K562 (cell line): ENCODE measurements at regions of chr13 and their contacts with region 1.

Region 1: DNA sequence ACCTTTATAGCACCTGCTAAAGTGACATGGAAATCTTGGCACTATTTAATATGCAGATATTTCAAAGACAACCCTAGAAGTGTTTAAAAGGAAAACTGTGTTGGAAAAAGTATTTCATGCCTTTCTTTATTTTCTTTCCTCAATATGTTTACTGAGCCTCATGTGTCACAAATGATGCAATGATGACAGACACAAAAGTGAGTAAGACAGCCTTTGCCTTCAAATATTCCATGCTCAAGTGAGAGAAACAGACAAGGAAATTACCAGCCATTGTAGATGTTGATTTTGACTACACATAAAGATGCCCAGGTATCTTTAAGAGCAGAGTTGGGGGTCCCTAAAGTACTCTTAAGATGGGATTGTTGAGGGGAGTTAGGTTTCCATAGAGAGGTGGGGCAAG is 48.0 kb upstream of the TPP2 start:
- DNase-seq: no peak
- ATAC-seq: no peak
- H3K4me3 ChIP-seq: no peak overlapping the region
- H3K27ac ChIP-seq: no peak overlapping the region
- H3K4me1 ChIP-seq: no peaks in the 10 kb centered on the region
- H3K27me3 ChIP-seq: no peaks in the 10 kb centered on the region
- CTCF ChIP-seq: no peak
- EP300 ChIP-seq: no peak
- POLR2A ChIP-seq: no peak
- RAD21 ChIP-seq: no peak

Region 2: GRCh38 chr13:102394158-102395053 is 154.4 kb before region 1 on chr13:
- CTCF ChIA-PET with region 1: no interaction called
- POLR2A ChIA-PET with region 1: no interaction called
- in situ Hi-C with region 1: no loop called
- intact Hi-C with region 1: loop called (anchors 10 kb)
- DNase-seq: peak; percentile 72 to 83 (median 74)
- ATAC-seq: peak; percentile 88
- H3K4me3 ChIP-seq: peak overlapping the region; percentile 51
- H3K27ac ChIP-seq: no peak overlapping the region
- H3K4me1 ChIP-seq: peaks cover 0 to 11% of the 10 kb centered on the region in 2 experiments; a peak in 2 of 5 replicates
- H3K27me3 ChIP-seq: no peaks in the 10 kb centered on the region
- CTCF ChIP-seq: peak in 1 of 3 experiments; percentile 23; a peak in 1 of 6 replicates
- EP300 ChIP-seq: no peak
- POLR2A ChIP-seq: no peak
- RAD21 ChIP-seq: no peak

Region 3: DNA sequence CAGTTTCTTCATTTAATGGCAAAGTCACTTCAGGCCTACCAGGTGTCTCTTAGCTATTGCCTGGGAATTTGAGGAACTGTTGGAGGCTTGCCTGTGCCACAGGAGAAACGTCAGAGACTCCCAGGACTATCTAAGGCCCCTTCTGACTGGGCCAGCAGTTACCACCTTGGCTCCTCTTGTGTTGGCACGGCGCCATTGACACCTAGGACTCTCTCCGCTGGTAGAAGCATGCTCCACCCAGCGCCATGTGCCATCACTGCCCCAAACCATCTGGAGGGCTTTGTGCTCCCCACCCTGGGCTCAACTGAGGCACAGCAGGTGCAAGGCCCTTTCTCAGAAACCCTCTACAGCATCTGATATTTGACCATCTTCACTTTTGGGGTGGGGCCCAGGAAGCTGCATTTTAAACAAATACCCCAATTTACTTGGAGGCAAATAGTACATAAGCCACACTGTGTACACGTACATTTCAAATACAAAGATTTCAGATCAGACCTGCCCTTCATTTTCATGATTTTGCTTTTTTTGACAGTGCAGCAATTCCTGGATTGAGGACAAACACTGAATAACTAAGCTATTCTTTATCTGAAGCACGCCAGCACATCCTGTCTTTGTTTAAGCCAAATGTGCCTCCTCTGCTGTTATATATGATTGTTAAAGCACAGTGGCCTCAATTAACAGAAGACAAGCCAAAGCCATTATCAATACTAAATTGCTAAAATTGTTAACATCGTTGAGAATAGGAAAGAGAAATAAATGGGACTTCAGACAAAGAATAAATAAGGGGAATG is 11.9 kb before region 1 on chr13:
- CTCF ChIA-PET with region 1: no interaction called
- POLR2A ChIA-PET with region 1: no interaction called
- in situ Hi-C with region 1: no loop called
- intact Hi-C with region 1: no loop called
- DNase-seq: no peak
- ATAC-seq: no peak
- H3K4me3 ChIP-seq: no peak overlapping the region
- H3K27ac ChIP-seq: no peak overlapping the region
- H3K4me1 ChIP-seq: no peaks in the 10 kb centered on the region
- H3K27me3 ChIP-seq: no peaks in the 10 kb centered on the region
- CTCF ChIP-seq: no peak
- EP300 ChIP-seq: no peak
- POLR2A ChIP-seq: no peak
- RAD21 ChIP-seq: no peak